B cell (primary cell): ENCODE measurements at regions of chr10 and their contacts with region 1.

Region 1: GRCh38 chr10:69573056-69573806 is at the start of gene NEUROG3:
- DNase-seq: peak; percentile 39
- ATAC-seq: peak; percentile 64
- H3K4me3 ChIP-seq: peak within 1 kb of the TSS; percentile 13 to 44 (median 43)
- H3K4me3 Mint-ChIP-seq: peak within 1 kb of the TSS; percentile 81
- H3K27ac ChIP-seq: no peak within 1 kb of the TSS
- H3K27ac Mint-ChIP-seq: no peak within 1 kb of the TSS
- H3K4me1 ChIP-seq: peaks cover 32 to 35% of the 10 kb centered on the region in 2 donors
- H3K4me1 Mint-ChIP-seq: peaks cover 26% of the 10 kb centered on the region
- H3K27me3 ChIP-seq: peaks cover 0 to 91% (median 32%) of the 10 kb centered on the region in 4 experiments
- H3K27me3 Mint-ChIP-seq: peaks cover 72% of the 10 kb centered on the region
- CTCF ChIP-seq: no peak
- total RNA-seq, gene NEUROG3: not detected in 2 replicates

Region 2: GRCh38 chr10:68861253-68861652 is 712.0 kb before region 1 on chr10:
- CTCF ChIA-PET with region 1: no interaction called
- POLR2A ChIA-PET with region 1: interaction called, 10 read pairs
- intact Hi-C with region 1: no loop called
- DNase-seq: no peak
- ATAC-seq: no peak
- H3K4me3 ChIP-seq: no peak overlapping the region
- H3K4me3 Mint-ChIP-seq: no peak overlapping the region
- H3K27ac ChIP-seq: no peak overlapping the region
- H3K27ac Mint-ChIP-seq: no peak overlapping the region
- H3K4me1 ChIP-seq: no peaks in the 10 kb centered on the region
- H3K4me1 Mint-ChIP-seq: no peaks in the 10 kb centered on the region
- H3K27me3 ChIP-seq: peaks cover 0 to 3% (median 0%) of the 10 kb centered on the region in 4 experiments
- H3K27me3 Mint-ChIP-seq: no peaks in the 10 kb centered on the region
- CTCF ChIP-seq: no peak